Breast epithelium (tissue), 4 donors: ENCODE measurements at regions of chr3 and their contacts with region 1.

Region 1: GRCh38 chr3:71210257-71211007 is 373.1 kb downstream of the FOXP1 start:
- DNase-seq: peak in 1 of 2 donors; percentile 24
- H3K4me3 ChIP-seq: no peak overlapping the region
- H3K27ac ChIP-seq: peak overlapping the region; percentile 69 to 78
- H3K4me1 ChIP-seq: no peaks in the 10 kb centered on the region
- H3K27me3 ChIP-seq: no peaks in the 10 kb centered on the region
- CTCF ChIP-seq: peak in 1 of 3 donors; percentile 9
- POLR2A ChIP-seq: no peak

Region 2: GRCh38 chr3:70789898-70790297 is 420.5 kb before region 1 on chr3:
- intact Hi-C with region 1: no loop called
- DNase-seq: no peak
- H3K4me3 ChIP-seq: no peak overlapping the region
- H3K27ac ChIP-seq: no peak overlapping the region
- H3K4me1 ChIP-seq: no peaks in the 10 kb centered on the region
- H3K27me3 ChIP-seq: no peaks in the 10 kb centered on the region
- CTCF ChIP-seq: no peak
- POLR2A ChIP-seq: no peak

Region 3: GRCh38 chr3:71601811-71602210 is 391.4 kb after region 1 on chr3:
- intact Hi-C with region 1: no loop called
- DNase-seq: no peak
- H3K4me3 ChIP-seq: no peak overlapping the region
- H3K27ac ChIP-seq: no peak overlapping the region
- H3K4me1 ChIP-seq: no peaks in the 10 kb centered on the region
- H3K27me3 ChIP-seq: no peaks in the 10 kb centered on the region
- CTCF ChIP-seq: no peak
- POLR2A ChIP-seq: no peak

Region 4: DNA sequence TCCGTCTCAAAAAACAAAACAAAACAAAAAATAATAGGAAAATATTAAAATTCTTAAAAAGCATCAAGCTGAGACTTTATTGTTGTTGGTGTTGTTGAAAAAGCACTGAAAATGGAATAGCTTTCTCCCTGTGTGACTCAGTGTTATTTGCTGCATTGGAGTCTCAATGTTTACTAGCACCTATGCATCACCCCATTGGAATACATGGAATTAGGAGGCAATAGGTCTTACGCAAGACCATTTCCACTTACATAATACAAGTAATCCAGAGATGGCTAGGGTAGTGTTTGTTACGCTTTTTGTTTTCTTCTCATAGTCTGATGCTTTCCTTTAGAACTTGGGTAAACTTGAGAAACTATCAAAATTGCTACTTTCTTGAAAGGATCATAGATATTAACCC is 1692.6 kb after region 1 on chr3:
- intact Hi-C with region 1: loop called (anchors 5 kb)
- DNase-seq: no peak
- H3K4me3 ChIP-seq: no peak overlapping the region
- H3K27ac ChIP-seq: no peak overlapping the region
- H3K4me1 ChIP-seq: peaks cover 0 to 3% of the 10 kb centered on the region in 2 donors
- H3K27me3 ChIP-seq: no peaks in the 10 kb centered on the region
- CTCF ChIP-seq: no peak
- POLR2A ChIP-seq: no peak